Aorta (tissue), 5 donors: ENCODE measurements at regions of chr11 and their contacts with region 1.

Region 1: DNA sequence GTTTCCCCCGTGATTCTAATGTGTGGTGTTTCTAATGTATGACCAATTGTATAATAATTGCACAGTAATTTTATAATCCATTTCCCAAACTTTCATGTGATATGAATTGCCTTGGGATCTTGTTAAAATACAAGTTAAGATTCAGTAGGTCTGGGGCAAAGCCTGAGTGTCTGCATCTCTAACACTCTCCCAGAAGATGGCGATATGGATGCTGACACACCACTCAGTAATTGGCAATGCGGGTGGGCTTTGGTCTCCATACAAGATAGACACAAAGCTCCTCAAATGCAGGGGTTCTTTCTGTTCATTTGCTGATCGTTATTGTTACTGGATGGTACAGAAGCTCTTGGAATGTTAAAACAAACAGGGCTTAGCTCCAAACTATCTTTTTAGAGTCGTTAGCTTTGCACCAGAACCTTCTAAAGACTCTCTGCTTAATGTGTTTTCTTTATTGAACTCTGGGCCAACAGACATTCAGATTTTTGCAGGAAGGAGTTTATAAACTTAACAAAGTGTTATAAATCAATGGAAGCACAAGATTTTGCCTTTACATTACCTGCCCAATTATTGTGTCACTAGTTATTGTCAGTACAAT is 45.4 kb upstream of the ANO3 start:
- DNase-seq: no peak
- ATAC-seq: no peak
- H3K4me3 ChIP-seq: no peak overlapping the region
- H3K27ac ChIP-seq: no peak overlapping the region
- H3K4me1 ChIP-seq: peaks cover 0 to 2% of the 10 kb centered on the region in 2 donors
- H3K27me3 ChIP-seq: no peaks in the 10 kb centered on the region

Region 2: DNA sequence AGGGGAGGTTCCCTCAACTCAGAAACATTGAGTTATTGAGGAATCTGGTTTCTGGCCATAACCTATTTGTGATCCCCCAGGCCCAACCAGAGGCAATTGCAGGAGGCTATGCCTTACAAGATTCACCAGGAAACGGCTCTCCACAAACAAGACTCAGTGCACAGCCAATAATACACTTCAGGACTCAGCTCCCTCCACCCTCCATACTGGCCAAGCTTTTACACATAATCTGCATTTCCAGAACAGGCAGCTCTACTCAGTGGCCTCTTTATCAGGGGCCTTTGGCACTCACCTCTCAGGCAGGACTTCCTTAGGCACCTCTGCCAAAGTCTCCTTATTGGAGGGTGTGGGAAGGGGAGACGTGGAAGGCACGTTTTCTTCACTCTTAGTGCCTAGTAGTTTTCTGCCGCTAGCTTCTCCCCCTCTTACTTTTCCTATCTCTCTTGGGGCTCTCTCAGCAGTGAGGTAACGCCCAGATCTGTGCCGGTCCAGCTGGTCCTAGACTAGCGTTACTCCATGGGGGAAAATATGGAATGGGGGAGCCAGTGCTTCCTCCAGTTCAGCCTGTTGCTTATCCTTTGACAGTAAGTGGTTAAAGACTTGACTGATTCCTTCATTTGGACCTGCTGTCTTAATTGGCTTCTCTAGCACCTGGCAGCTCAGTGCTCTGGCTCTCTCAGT is 17.4 kb before region 1 on chr11:
- intact Hi-C with region 1: no loop called
- DNase-seq: no peak
- ATAC-seq: no peak
- H3K4me3 ChIP-seq: no peak overlapping the region
- H3K27ac ChIP-seq: no peak overlapping the region
- H3K4me1 ChIP-seq: no peaks in the 10 kb centered on the region
- H3K27me3 ChIP-seq: no peaks in the 10 kb centered on the region

Region 3: GRCh38 chr11:27158722-27159679 is 872.4 kb after region 1 on chr11:
- intact Hi-C with region 1: loop called in 1 of 2 experiments (anchors 10 kb)
- DNase-seq: peak; percentile 52 to 67
- ATAC-seq: peak; percentile 87
- H3K4me3 ChIP-seq: no peak overlapping the region
- H3K27ac ChIP-seq: no peak overlapping the region
- H3K4me1 ChIP-seq: no peaks in the 10 kb centered on the region
- H3K27me3 ChIP-seq: no peaks in the 10 kb centered on the region